H1 (cell line): ENCODE measurements at regions of chr10 and their contacts with region 1.

Region 1: GRCh38 chr10:55641601-55642000 is 719.5 kb downstream of the ZWINT start:
- DNase-seq: no peak
- H3K4me3 ChIP-seq: no peak overlapping the region
- H3K27ac ChIP-seq: no peak overlapping the region
- H3K4me1 ChIP-seq: no peaks in the 10 kb centered on the region
- H3K27me3 ChIP-seq: no peaks in the 10 kb centered on the region
- CTCF ChIP-seq: no peak
- EP300 ChIP-seq: no peak
- POLR2A ChIP-seq: no peak
- RAD21 ChIP-seq: no peak

Region 2: DNA sequence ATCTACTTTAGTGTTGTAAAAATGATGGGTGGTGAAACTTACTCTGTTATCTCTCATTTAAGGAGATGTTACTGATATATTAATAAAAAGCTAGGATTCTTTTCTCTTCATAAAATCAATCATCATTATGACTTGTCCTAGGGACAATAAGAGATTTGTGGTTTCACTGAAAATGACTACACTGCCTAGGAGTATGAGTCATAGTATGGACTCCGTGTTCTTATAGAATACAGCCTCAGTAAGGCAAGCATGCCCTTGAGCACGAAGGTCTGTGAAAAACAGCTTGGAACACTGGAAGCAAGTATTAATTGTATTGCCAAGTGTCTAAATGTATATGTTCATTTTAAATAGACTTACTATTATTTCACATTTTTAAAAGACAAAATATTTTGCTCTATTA is 91.4 kb before region 1 on chr10:
- CTCF ChIA-PET with region 1: no interaction called
- POLR2A ChIA-PET with region 1: no interaction called
- DNase-seq: no peak
- H3K4me3 ChIP-seq: no peak overlapping the region
- H3K27ac ChIP-seq: no peak overlapping the region
- H3K4me1 ChIP-seq: no peaks in the 10 kb centered on the region
- H3K27me3 ChIP-seq: no peaks in the 10 kb centered on the region
- CTCF ChIP-seq: no peak
- EP300 ChIP-seq: no peak
- POLR2A ChIP-seq: no peak
- RAD21 ChIP-seq: no peak

Region 3: GRCh38 chr10:55631071-55631654 is 10.4 kb before region 1 on chr10:
- CTCF ChIA-PET with region 1: interaction called, 20 read pairs
- POLR2A ChIA-PET with region 1: no interaction called
- DNase-seq: peak in 1 of 2 experiments; percentile 89
- H3K4me3 ChIP-seq: peak overlapping the region; percentile 53 to 81 (median 71)
- H3K27ac ChIP-seq: 0 out of 2 replicates have a peak overlapping the region, but pooled peaks have one; percentile 14
- H3K4me1 ChIP-seq: peaks cover 0 to 8% (median 0%) of the 10 kb centered on the region in 4 experiments; a peak in 3 of 7 replicates
- H3K27me3 ChIP-seq: peaks cover 0 to 23% (median 13%) of the 10 kb centered on the region in 4 experiments; a peak in 6 of 7 replicates
- CTCF ChIP-seq: peak; percentile 77 to 83 (median 80)
- EP300 ChIP-seq: no peak
- POLR2A ChIP-seq: peak in 1 of 2 experiments; percentile 28; a peak in 1 of 3 replicates
- RAD21 ChIP-seq: peak; percentile 84 to 85

Region 4: DNA sequence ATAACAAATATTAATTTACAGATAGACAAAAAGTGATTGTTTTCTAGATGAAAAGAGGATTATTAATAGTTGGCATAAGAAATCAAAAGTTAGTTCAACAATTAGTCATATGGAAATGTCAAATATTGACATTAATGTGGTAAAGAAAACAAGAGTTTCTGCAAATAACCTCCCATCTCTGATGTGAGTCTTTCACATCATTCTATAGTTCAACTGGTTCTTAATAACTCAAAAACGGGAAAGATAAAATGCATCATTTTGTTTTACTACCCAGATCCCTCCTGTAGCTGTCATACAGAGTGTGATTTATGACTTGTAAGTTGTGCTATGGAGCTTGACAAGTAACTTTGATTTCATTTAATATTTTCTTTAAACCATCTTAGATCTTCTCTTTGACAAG is 124.6 kb after region 1 on chr10:
- CTCF ChIA-PET with region 1: no interaction called
- POLR2A ChIA-PET with region 1: no interaction called
- DNase-seq: no peak
- H3K4me3 ChIP-seq: no peak overlapping the region
- H3K27ac ChIP-seq: no peak overlapping the region
- H3K4me1 ChIP-seq: no peaks in the 10 kb centered on the region
- H3K27me3 ChIP-seq: no peaks in the 10 kb centered on the region
- CTCF ChIP-seq: no peak
- EP300 ChIP-seq: no peak
- POLR2A ChIP-seq: no peak
- RAD21 ChIP-seq: no peak